Activated CD8-positive, alpha-beta T cell treated with anti-CD3 and anti-CD28 coated beads for 36 hours (primary cell): ENCODE measurements at regions of chr9 and their contacts with region 1.

Region 1: DNA sequence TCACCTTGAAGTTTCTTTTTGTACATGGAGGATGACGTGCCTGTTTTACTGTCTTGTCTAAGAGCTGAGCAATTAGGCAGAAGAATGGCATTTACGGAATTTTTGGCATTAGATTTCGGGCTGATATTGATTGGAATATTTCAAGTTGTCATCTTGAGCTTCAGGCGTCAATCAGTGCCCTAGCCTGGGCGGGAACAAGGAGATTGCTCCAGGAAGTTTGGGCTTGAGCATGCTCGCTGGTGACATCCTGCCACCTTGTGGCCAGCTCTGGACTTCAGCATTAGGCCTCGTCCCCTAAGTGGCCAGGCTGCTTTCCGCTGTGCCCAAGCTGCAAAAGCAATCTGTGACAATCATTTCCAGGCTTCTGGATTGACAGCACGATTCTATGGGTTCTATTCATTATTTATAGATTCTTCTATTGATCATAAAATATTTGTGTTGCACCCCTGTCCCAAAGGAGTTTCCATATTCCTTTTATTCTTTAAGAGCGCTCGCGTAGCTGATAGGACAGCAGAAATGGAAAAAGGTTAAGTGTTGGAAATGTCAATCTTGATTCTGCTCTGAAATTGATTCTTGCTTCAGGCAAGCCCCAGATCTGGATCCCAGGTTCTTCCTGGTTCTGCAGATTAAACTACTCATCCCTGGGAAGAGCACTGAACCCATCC is 79.3 kb downstream of the SLC28A3 start:
- DNase-seq: peak; percentile 75
- ATAC-seq: peak; percentile 76
- H3K4me3 Mint-ChIP-seq: no peak overlapping the region
- H3K27ac Mint-ChIP-seq: no peak overlapping the region
- H3K4me1 Mint-ChIP-seq: peaks cover 6% of the 10 kb centered on the region
- H3K27me3 Mint-ChIP-seq: peaks cover 5% of the 10 kb centered on the region
- CTCF ChIP-seq: peak; percentile 88

Region 2: GRCh38 chr9:83937911-83938323 is 323.3 kb before region 1 on chr9:
- CTCF ChIA-PET with region 1: interaction called, 15 read pairs
- POLR2A ChIA-PET with region 1: no interaction called
- intact Hi-C with region 1: loop called (anchors 5 kb)
- DNase-seq: peak; percentile 25
- ATAC-seq: peak; percentile 58
- H3K4me3 Mint-ChIP-seq: no peak overlapping the region
- H3K27ac Mint-ChIP-seq: no peak overlapping the region
- H3K4me1 Mint-ChIP-seq: no peaks in the 10 kb centered on the region
- H3K27me3 Mint-ChIP-seq: no peaks in the 10 kb centered on the region
- CTCF ChIP-seq: peak; percentile 83

Region 3: DNA sequence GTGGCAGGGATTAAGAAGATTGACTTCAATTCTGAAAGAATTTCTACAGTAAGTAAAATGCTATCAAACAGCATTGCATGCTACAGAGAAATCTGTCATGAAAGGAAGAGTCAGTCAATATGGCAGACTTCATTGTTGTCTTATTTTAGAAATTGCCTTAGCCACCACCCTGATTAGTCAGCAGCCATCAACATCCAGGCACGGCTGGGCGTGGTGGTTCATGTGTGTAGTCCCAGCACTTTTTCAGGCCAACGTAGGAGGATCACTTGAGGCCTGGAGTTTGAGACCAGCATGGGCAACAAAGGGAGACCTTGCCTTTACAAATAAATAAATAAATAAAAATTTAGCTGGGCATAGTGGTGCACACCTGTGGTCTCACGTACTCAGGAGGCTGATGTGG is 234.0 kb before region 1 on chr9:
- CTCF ChIA-PET with region 1: no interaction called
- POLR2A ChIA-PET with region 1: no interaction called
- intact Hi-C with region 1: no loop called
- DNase-seq: no peak
- ATAC-seq: no peak
- H3K4me3 Mint-ChIP-seq: no peak overlapping the region
- H3K27ac Mint-ChIP-seq: no peak overlapping the region
- H3K4me1 Mint-ChIP-seq: no peaks in the 10 kb centered on the region
- H3K27me3 Mint-ChIP-seq: peaks cover 5% of the 10 kb centered on the region
- CTCF ChIP-seq: no peak

Region 4: GRCh38 chr9:84230355-84231145 is 30.7 kb before region 1 on chr9:
- CTCF ChIA-PET with region 1: interaction called, 11 read pairs
- POLR2A ChIA-PET with region 1: no interaction called
- intact Hi-C with region 1: no loop called
- DNase-seq: no peak
- ATAC-seq: no peak
- H3K4me3 Mint-ChIP-seq: no peak overlapping the region
- H3K27ac Mint-ChIP-seq: no peak overlapping the region
- H3K4me1 Mint-ChIP-seq: no peaks in the 10 kb centered on the region
- H3K27me3 Mint-ChIP-seq: peaks cover 3% of the 10 kb centered on the region
- CTCF ChIP-seq: no peak

Region 5: DNA sequence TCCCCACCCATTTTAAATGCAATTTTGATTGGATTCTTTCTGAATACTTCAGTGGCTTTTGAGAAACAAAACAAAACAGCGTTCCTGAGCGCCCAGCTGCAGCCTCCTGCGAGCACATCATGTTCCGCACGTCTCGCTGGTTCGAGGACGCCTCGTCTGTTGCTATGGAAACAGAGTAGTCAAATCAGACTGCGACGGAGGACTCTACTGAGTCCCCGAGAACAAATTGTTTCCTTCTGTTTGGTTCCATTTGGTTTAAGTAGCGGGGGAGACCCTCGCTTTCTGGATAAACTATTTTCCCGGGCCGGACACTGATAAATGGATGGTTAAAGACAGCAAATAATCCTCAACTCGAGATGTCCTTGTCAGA is 10.3 kb after region 1 on chr9:
- CTCF ChIA-PET with region 1: interaction called, 27 read pairs
- POLR2A ChIA-PET with region 1: no interaction called
- intact Hi-C with region 1: no loop called
- DNase-seq: peak; percentile 87
- ATAC-seq: peak; percentile 96
- H3K4me3 Mint-ChIP-seq: peak overlapping the region; percentile 73
- H3K27ac Mint-ChIP-seq: peak overlapping the region; percentile 60
- H3K4me1 Mint-ChIP-seq: peaks cover 12% of the 10 kb centered on the region
- H3K27me3 Mint-ChIP-seq: peaks cover 44% of the 10 kb centered on the region
- CTCF ChIP-seq: no peak

Region 6: GRCh38 chr9:84285381-84285780 is 24.2 kb after region 1 on chr9:
- CTCF ChIA-PET with region 1: interaction called, 19 read pairs
- POLR2A ChIA-PET with region 1: no interaction called
- intact Hi-C with region 1: no loop called
- DNase-seq: no peak
- ATAC-seq: no peak
- H3K4me3 Mint-ChIP-seq: no peak overlapping the region
- H3K27ac Mint-ChIP-seq: no peak overlapping the region
- H3K4me1 Mint-ChIP-seq: peaks cover 12% of the 10 kb centered on the region
- H3K27me3 Mint-ChIP-seq: peaks cover 5% of the 10 kb centered on the region
- CTCF ChIP-seq: no peak

Region 7: GRCh38 chr9:84296146-84296843 is 35.1 kb after region 1 on chr9:
- CTCF ChIA-PET with region 1: interaction called, 15 read pairs
- POLR2A ChIA-PET with region 1: interaction called, 6 read pairs
- intact Hi-C with region 1: no loop called
- DNase-seq: peak; percentile 79
- ATAC-seq: peak; percentile 79
- H3K4me3 Mint-ChIP-seq: peak overlapping the region; percentile 56
- H3K27ac Mint-ChIP-seq: peak overlapping the region; percentile 96
- H3K4me1 Mint-ChIP-seq: peaks cover 51% of the 10 kb centered on the region
- H3K27me3 Mint-ChIP-seq: no peaks in the 10 kb centered on the region
- CTCF ChIP-seq: no peak

Region 8: GRCh38 chr9:84315278-84315877 is 54.2 kb after region 1 on chr9:
- CTCF ChIA-PET with region 1: interaction called, 37 read pairs
- POLR2A ChIA-PET with region 1: no interaction called
- intact Hi-C with region 1: loop called (anchors 10 kb)
- DNase-seq: peak; percentile 72
- ATAC-seq: peak; percentile 70
- H3K4me3 Mint-ChIP-seq: no peak overlapping the region
- H3K27ac Mint-ChIP-seq: no peak overlapping the region
- H3K4me1 Mint-ChIP-seq: peaks cover 9% of the 10 kb centered on the region
- H3K27me3 Mint-ChIP-seq: peaks cover 5% of the 10 kb centered on the region
- CTCF ChIP-seq: peak; percentile 89